ENCODE measurements at regions of chr21 and their contacts with region 1.

Region 1: DNA sequence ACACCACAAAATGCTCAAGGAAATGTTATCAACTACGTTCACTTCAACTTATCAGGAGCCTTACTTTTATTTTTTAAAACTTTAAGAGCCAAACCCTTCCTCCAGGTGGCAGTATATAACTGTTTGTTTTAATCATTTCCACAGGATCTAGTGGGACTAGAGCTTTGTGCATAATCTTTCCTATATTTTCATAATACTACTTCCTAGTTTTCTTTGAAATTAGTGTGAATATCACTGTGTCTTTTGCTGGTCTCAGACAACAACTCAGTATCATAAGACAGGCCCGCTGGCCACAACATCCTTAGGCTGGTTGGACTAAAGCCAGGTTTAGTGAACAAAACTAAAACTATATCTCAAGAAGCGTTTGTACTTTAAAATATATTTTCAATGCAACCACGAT is 145.5 kb downstream of the TIAM1 start:
- DNase-seq: no peak
- H3K4me3 Mint-ChIP-seq: no peak overlapping the region
- H3K27ac Mint-ChIP-seq: no peak overlapping the region
- H3K4me1 Mint-ChIP-seq: peaks cover 44% of the 10 kb centered on the region
- H3K27me3 Mint-ChIP-seq: no peaks in the 10 kb centered on the region

Region 2: DNA sequence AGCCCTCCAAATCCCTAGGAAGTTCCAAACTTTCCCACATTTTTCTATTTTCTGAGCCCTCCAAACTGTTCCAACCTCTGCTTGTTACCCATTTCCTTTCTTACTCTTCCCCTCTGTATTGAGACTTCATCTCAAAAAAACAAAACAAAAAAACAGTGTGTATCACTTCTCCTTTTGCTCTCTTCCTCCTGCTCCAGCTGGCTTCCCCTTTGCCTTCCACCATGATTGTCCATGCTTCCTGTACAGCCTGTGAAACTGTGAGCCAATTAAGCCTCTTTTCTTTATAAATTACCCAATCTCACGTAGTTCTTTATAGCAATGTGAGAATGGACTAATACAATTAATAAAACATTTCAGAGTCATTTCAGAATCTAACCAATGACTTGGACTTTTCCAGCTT is 90.7 kb before region 1 on chr21:
- CTCF ChIA-PET with region 1: no interaction called
- POLR2A ChIA-PET with region 1: no interaction called
- intact Hi-C with region 1: no loop called
- DNase-seq: no peak
- H3K4me3 Mint-ChIP-seq: no peak overlapping the region
- H3K27ac Mint-ChIP-seq: no peak overlapping the region
- H3K4me1 Mint-ChIP-seq: peaks cover 32% of the 10 kb centered on the region
- H3K27me3 Mint-ChIP-seq: no peaks in the 10 kb centered on the region

Region 3: DNA sequence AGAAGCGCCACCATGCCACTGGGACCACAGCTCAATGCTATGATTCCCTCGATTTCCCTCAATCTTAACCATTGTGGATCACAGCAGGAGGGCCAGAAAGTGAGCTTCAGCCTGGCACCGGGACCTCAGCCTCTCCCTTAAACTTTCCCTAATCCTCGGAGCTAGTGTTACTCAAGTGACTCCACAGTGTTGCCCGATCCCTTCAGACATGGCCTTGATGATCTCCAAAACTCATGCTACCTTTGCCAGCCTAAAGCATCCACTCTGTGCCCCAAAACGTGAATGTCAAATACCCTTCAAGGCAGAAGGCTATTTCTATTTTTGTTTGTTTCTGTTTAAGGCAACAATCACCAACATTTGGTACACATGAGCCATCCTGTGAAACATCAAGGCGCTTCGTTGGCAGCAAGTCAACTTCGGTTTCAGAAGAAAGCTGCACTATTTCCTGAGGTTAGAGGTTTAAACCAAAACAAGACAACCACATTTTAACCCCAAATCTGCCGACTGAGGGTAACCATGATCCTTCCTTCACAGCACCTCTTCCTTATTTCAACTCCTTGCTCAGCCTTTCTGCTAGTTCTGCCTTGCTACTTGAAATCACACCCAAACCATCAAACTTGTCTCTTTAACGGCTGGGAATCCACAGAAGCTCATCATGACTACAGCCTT is 65.9 kb before region 1 on chr21:
- CTCF ChIA-PET with region 1: interaction called, 6 read pairs
- POLR2A ChIA-PET with region 1: no interaction called
- intact Hi-C with region 1: loop called (anchors 1 kb)
- DNase-seq: peak; percentile 82
- H3K4me3 Mint-ChIP-seq: peak overlapping the region; percentile 64
- H3K27ac Mint-ChIP-seq: peak overlapping the region; percentile 95
- H3K4me1 Mint-ChIP-seq: peaks cover 65% of the 10 kb centered on the region
- H3K27me3 Mint-ChIP-seq: no peaks in the 10 kb centered on the region

Region 4: GRCh38 chr21:31326522-31327242 is 128.1 kb after region 1 on chr21:
- CTCF ChIA-PET with region 1: no interaction called
- POLR2A ChIA-PET with region 1: interaction called, 8 read pairs
- intact Hi-C with region 1: loop called (anchors 1 kb)
- DNase-seq: peak; percentile 81
- H3K4me3 Mint-ChIP-seq: peak overlapping the region; percentile 47
- H3K27ac Mint-ChIP-seq: peak overlapping the region; percentile 88
- H3K4me1 Mint-ChIP-seq: peaks cover 30% of the 10 kb centered on the region
- H3K27me3 Mint-ChIP-seq: no peaks in the 10 kb centered on the region

Region 5: DNA sequence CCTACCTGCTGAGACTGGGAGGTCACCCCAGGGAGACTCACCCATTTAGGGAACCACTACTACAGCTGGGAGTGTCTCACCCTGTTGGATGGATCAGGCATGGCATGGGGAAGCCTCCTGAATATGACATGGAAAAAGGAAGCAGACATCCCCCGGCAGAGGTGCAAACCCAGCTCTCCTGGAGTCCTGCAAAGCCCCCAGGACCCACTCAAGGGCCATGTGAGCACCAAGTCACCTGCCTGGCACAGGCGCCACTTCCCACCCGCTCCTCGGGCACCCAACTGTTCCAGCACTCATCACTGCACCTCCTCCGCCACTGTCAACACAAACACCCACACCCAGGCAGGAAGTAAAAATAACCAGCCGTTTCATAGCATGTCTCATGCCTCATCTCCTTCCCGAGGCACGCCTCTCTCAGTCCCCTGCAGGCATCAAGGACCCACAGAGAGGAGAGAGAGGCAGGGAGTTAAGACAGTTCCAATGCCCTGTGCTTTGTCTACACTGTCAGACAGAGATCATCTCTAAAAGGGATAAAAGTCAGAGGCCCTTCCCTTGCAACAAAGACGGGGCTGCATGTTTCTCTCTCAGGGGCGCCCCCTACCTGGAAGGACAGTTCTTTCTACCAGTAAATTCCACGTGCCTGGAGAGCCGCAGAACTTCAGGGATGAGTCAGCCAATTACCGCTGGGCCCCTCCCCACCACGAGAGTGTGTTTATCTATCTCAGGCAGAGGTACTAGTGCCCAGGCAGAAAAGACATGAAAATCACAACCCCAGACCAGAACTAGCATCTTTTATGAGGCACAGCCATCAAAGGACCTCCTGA is 310.8 kb after region 1 on chr21:
- CTCF ChIA-PET with region 1: no interaction called
- POLR2A ChIA-PET with region 1: no interaction called
- intact Hi-C with region 1: loop called (anchors 1 kb)
- DNase-seq: peak; percentile 92
- H3K4me3 Mint-ChIP-seq: peak overlapping the region; percentile 44
- H3K27ac Mint-ChIP-seq: peak overlapping the region; percentile 60
- H3K4me1 Mint-ChIP-seq: peaks cover 24% of the 10 kb centered on the region
- H3K27me3 Mint-ChIP-seq: no peaks in the 10 kb centered on the region

Region 6: GRCh38 chr21:31580866-31581276 is 382.3 kb after region 1 on chr21:
- CTCF ChIA-PET with region 1: interaction called, 78 read pairs
- POLR2A ChIA-PET with region 1: no interaction called
- intact Hi-C with region 1: loop called (anchors 1 kb)
- DNase-seq: peak; percentile 84
- H3K4me3 Mint-ChIP-seq: no peak overlapping the region
- H3K27ac Mint-ChIP-seq: no peak overlapping the region
- H3K4me1 Mint-ChIP-seq: peaks cover 4% of the 10 kb centered on the region
- H3K27me3 Mint-ChIP-seq: peaks cover 3% of the 10 kb centered on the region

Measured in activated CD4-positive, alpha-beta memory T cell treated with anti-CD3 and anti-CD28 coated beads for 36 hours (primary cell).